Activated T-helper 2 cell treated with anti-CD3 and anti-CD28 coated beads, Interferon-gamma antibody, Interleukin-2, Interleukin-4, amounts not matched to agents 10 μg/mL and 5 μg/mL and 100 μg/mL, durations not matched to agents 14 hours and 24 hours and 36 hours (primary cell): ENCODE measurements at regions of chr10 and their contacts with region 1.

Region 1: GRCh38 chr10:50224330-50224952 is 26.9 kb downstream of the ASAH2 start:
- DNase-seq: no peak
- H3K4me3 Mint-ChIP-seq: no peak overlapping the region
- H3K27ac Mint-ChIP-seq: no peak overlapping the region
- H3K4me1 Mint-ChIP-seq: peaks cover 4% of the 10 kb centered on the region
- H3K27me3 Mint-ChIP-seq: peaks cover 33% of the 10 kb centered on the region

Region 2: GRCh38 chr10:49594594-49594993 is 629.8 kb before region 1 on chr10:
- intact Hi-C with region 1: loop called (anchors 1 kb)
- DNase-seq: no peak
- H3K4me3 Mint-ChIP-seq: no peak overlapping the region
- H3K27ac Mint-ChIP-seq: no peak overlapping the region
- H3K4me1 Mint-ChIP-seq: peaks cover 4% of the 10 kb centered on the region
- H3K27me3 Mint-ChIP-seq: peaks cover 11% of the 10 kb centered on the region

Region 3: DNA sequence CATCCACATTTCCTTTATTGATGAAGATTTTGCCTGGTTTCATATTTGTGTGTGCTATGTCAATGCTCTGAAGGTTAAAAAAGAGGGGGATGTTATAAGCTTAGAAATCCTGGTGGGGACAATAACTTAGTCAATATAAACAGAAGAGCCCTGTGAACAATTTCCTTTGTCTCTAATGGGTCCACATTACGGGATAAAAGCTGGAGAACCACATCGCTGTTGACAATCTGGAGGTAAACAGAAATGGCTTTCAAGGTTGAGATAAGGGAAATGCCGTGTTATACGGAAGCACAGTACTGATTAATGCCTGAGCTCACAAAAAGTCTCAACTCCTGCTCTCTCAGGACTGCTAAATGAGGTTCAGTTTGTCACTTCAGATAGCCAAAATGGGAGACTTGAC is 10.0 kb after region 1 on chr10:
- intact Hi-C with region 1: no loop called
- DNase-seq: no peak
- H3K4me3 Mint-ChIP-seq: no peak overlapping the region
- H3K27ac Mint-ChIP-seq: no peak overlapping the region
- H3K4me1 Mint-ChIP-seq: no peaks in the 10 kb centered on the region
- H3K27me3 Mint-ChIP-seq: peaks cover 60% of the 10 kb centered on the region